Aorta (tissue), 5 donors: ENCODE measurements at regions of chr18 and their contacts with region 1.

Region 1: GRCh38 chr18:2758309-2758708 is 88.5 kb upstream of the EMILIN2 start:
- DNase-seq: no peak
- ATAC-seq: no peak
- H3K4me3 ChIP-seq: no peak overlapping the region
- H3K27ac ChIP-seq: no peak overlapping the region
- H3K4me1 ChIP-seq: no peaks in the 10 kb centered on the region
- H3K27me3 ChIP-seq: no peaks in the 10 kb centered on the region

Region 2: DNA sequence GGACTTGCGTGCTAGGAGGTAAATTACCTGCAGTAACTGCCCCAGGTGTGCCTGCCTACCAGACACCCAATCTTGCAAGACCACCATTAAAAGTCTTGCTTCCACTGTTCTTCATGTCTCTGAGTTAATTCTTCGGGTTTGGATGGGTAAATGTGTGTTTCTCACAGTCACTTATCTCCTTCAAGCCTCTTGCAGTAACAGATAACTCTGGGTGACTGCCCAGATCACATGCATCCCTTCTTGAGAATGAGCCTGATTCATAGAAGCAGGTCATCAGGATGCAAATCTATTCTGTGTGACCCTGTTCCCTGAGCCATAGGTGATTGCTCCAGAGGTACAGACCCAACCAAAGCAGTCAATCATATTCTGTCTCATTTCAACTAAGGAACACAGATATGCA is 381.6 kb before region 1 on chr18:
- intact Hi-C with region 1: no loop called
- DNase-seq: no peak
- ATAC-seq: no peak
- H3K4me3 ChIP-seq: no peak overlapping the region
- H3K27ac ChIP-seq: no peak overlapping the region
- H3K4me1 ChIP-seq: no peaks in the 10 kb centered on the region
- H3K27me3 ChIP-seq: no peaks in the 10 kb centered on the region

Region 3: GRCh38 chr18:2692508-2692907 is 65.8 kb before region 1 on chr18:
- intact Hi-C with region 1: loop called in 1 of 2 experiments (anchors 10 kb)
- DNase-seq: no peak
- ATAC-seq: no peak
- H3K4me3 ChIP-seq: no peak overlapping the region
- H3K27ac ChIP-seq: no peak overlapping the region
- H3K4me1 ChIP-seq: no peaks in the 10 kb centered on the region
- H3K27me3 ChIP-seq: no peaks in the 10 kb centered on the region